ENCODE measurements at regions of chr1 and their contacts with region 1.

Region 1: DNA sequence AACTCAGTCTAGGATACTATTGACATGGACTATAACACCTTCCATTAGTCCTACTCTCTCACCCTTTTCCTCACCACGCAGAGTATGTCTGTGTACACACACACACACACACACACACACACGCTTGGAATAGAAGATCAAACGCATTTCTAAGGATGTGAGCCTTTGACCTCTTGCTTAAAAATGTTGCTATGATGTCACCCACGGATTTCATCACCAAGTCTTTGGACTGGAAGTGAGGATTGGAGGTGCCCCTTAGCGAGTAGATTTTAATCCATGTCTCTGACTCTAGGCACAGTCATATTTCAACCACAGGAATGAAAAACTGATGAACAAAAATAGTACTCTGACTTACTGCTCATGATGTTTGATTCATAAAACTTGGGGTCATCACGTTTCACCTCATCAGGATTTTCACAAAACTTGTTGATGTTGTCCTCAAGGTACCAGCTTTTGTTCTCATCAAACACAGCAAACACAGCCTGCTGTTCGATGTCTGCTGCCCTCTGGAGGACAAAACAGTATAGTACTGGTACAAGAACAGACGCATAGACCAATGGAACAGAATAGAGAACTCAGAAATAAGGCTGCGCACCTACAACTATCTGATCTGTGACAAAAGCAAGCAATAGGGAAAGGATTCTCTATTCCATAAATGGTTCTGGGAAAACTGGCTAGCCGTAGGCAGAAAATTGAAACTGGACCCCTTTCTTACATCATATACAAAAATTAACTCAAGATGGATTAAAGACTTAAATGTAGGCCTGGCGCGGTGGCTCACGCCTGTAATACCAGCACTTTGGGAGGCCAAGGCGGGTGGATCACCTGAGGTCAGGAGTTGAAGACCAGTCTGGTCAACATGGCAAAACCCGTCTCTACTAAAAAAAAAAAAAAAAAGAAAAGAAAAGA is 39.9 kb downstream of the F5 start:
- DNase-seq: peak; percentile 66
- H3K4me3 ChIP-seq: no peak overlapping the region
- H3K27ac ChIP-seq: no peak overlapping the region
- H3K4me1 ChIP-seq: no peaks in the 10 kb centered on the region
- H3K27me3 ChIP-seq: peaks cover 0 to 2% of the 10 kb centered on the region in 2 experiments
- CTCF ChIP-seq: peak; percentile 63 to 66
- POLR2A ChIP-seq: no peak

Region 2: GRCh38 chr1:168439456-168440375 is 1106.6 kb before region 1 on chr1:
- CTCF ChIA-PET with region 1: interaction called, 10 read pairs
- POLR2A ChIA-PET with region 1: no interaction called
- dilution Hi-C with region 1: no loop called
- intact Hi-C with region 1: loop called (anchors 1 kb)
- DNase-seq: peak; percentile 63
- H3K4me3 ChIP-seq: no peak overlapping the region
- H3K27ac ChIP-seq: no peak overlapping the region
- H3K4me1 ChIP-seq: no peaks in the 10 kb centered on the region
- H3K27me3 ChIP-seq: no peaks in the 10 kb centered on the region
- CTCF ChIP-seq: peak; percentile 69 to 74
- POLR2A ChIP-seq: no peak

Region 3: DNA sequence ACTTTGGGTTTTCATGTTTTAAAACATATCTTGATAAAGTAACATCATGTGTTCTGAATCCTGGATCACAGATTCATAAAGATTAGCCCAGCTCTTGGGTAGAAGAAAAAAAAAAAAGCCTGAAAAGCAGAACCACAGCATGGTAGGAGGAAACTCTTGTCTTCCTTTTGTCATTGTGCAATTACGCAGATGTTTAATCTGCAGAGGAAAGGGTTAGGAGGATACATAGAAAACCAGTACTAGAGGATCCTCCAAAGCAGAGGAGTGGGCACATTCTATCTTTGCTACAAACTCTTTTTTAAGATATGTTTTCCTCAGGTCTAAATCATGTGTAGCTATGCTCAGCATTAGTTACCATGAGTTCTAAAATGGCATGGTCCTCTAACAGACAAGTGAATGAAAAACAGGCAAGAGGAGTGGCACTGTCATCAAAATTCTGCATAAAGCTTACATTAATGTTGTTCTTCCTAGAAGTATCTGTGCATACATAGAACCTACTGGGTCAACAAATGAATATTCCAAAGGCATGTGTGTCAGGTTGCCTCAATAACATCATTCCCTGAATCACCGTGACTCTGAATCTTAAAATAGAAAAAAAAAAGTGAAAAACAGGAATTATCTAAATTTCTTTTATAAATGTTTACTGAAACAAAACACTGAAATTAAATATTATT is 285.7 kb before region 1 on chr1:
- CTCF ChIA-PET with region 1: no interaction called
- POLR2A ChIA-PET with region 1: no interaction called
- dilution Hi-C with region 1: no loop called
- intact Hi-C with region 1: no loop called
- DNase-seq: no peak
- H3K4me3 ChIP-seq: no peak overlapping the region
- H3K27ac ChIP-seq: no peak overlapping the region
- H3K4me1 ChIP-seq: no peaks in the 10 kb centered on the region
- H3K27me3 ChIP-seq: no peaks in the 10 kb centered on the region
- CTCF ChIP-seq: no peak
- POLR2A ChIP-seq: no peak

Region 4: DNA sequence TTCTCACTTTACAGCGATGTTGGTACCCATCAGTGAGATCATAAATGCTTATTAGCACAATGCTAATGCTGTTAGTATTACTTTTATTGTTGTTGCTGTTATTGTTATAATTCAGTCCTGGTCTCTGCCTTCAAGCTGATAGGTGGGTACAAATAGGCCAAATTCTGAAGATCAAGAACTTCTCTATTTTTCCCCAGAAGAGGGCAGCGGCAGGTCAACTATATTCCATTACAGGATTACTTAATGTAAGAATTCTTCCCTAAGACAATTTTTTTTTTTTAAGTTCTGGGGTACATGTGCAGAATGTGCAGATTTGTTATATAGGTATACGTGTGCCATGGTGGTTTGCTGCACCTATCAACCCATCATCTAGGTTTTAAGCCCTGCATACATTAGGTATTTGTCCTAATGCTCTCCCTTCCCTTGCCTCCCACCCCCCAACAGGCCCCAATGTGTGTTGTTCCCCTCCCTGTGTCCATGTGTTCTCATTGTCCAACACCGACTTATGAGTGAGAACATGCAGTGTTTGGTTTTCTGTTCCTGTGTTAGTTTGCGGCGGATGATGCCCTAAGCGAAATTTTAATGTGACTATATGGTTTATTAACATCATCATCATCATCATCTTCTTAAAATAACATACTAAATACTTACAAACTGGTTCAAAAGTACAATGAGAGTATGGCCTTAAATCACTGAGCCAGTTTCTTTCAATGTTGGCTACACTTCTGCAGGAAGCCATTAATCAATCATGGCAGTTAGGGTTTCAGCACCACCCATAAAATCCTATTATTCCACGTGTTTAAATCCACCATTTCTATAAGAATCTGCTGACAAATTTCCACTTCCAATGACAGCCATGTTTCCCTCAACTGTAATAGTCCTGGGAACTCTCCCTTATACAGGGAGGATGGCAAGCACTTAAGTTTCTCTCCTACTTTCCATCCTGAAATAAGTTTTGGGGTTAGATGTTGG is 79.8 kb before region 1 on chr1:
- CTCF ChIA-PET with region 1: interaction called, 73 read pairs
- POLR2A ChIA-PET with region 1: no interaction called
- dilution Hi-C with region 1: no loop called
- intact Hi-C with region 1: loop called (anchors 1 kb)
- DNase-seq: peak; percentile 59
- H3K4me3 ChIP-seq: no peak overlapping the region
- H3K27ac ChIP-seq: no peak overlapping the region
- H3K4me1 ChIP-seq: no peaks in the 10 kb centered on the region
- H3K27me3 ChIP-seq: no peaks in the 10 kb centered on the region
- CTCF ChIP-seq: no peak
- POLR2A ChIP-seq: no peak

Region 5: GRCh38 chr1:169509351-169509750 is 37.0 kb before region 1 on chr1:
- CTCF ChIA-PET with region 1: interaction called, 10 read pairs
- POLR2A ChIA-PET with region 1: no interaction called
- dilution Hi-C with region 1: no loop called
- intact Hi-C with region 1: no loop called
- DNase-seq: peak; percentile 35
- H3K4me3 ChIP-seq: no peak overlapping the region
- H3K27ac ChIP-seq: no peak overlapping the region
- H3K4me1 ChIP-seq: peaks cover 35% of the 10 kb centered on the region
- H3K27me3 ChIP-seq: no peaks in the 10 kb centered on the region
- CTCF ChIP-seq: no peak
- POLR2A ChIP-seq: no peak

Region 6: DNA sequence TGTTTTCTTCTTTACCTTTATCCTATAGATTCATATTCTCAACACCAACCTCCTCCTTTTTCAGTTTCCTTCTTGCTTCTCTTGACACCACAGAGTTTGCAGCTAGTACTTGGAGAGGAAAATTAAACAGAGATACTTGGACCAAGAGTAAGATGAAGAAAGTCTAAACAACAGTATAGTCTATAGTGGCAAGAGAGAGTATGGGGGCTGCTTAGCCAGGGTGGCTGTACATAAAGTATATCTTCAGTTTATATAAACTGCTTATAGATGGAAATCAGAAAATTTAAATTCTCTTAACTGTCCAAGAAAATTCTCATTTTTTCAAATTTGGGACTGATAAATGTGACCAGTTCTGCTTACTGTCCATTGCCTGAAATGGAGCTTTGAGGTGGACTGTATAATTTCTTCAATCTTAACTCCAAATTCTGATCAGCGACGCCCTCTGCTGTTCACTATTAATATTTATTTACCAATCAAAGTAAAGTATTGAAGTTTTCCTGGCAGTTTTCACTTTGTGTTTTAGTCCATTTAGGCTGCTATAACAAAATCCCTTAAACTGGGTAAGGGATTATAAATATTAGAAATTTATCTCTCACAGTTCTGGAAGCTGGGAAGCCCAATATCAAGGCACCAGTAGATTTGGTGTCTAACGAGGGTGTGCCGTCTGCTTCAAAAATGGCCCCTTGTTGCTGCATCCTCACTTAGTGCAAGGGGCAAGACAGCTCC is 263.2 kb after region 1 on chr1:
- CTCF ChIA-PET with region 1: interaction called, 40 read pairs
- POLR2A ChIA-PET with region 1: no interaction called
- dilution Hi-C with region 1: no loop called
- intact Hi-C with region 1: loop called (anchors 1 kb)
- DNase-seq: peak; percentile 58
- H3K4me3 ChIP-seq: no peak overlapping the region
- H3K27ac ChIP-seq: no peak overlapping the region
- H3K4me1 ChIP-seq: no peaks in the 10 kb centered on the region
- H3K27me3 ChIP-seq: no peaks in the 10 kb centered on the region
- CTCF ChIP-seq: peak in 1 of 2 donors; percentile 23
- POLR2A ChIP-seq: no peak